PC-3 (cell line): ENCODE measurements at regions of chr1 and their contacts with region 1.

Region 1: DNA sequence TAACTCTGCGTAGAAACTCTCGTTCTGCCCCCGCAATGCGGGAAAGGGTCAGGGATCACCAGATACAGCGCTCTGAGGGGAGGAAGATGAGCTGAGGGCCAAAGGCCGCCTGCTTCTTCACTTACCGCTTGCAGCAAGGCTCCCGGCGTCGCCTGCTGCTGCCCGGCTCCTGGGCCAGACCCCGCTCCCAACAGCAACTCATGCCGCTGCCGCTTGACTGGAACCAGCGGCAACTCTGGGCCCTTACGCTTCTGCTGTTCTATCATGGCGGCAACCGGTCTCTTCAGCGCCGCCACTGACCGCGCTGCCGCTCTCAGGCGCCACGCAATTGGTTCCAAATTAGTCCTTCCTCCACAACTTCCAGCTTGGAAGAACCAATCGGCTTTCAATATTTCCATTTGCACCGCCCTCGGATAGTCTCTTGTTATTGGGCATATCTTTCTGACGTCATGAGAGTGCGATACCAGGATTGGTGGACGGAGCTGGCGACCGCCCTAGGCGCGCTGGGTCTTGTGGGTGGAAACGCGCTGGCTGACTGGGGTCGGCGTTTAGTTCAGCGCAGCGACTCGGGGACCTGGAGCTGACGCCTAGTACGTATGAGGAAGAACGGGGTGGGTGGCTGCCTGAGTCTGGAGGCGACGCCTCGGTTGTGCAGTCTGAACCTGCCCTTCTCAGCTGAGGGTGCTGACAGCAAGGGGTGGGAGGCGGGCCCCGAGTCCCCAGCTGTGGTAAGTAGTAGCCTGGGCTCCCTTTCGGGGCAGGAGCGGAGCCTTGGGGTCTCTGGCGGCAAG is at the starts of genes SNRNP40 and ZCCHC17:
- DNase-seq: peak; percentile 99
- ATAC-seq: peak; percentile 94
- H3K4me3 ChIP-seq: peak within 1 kb of the TSS; percentile 81
- H3K27ac ChIP-seq: peak within 1 kb of the TSS; percentile 37
- H3K4me1 ChIP-seq: peaks cover 32% of the 10 kb centered on the region
- H3K27me3 ChIP-seq: no peaks in the 10 kb centered on the region
- CTCF ChIP-seq: no peak; the same call in 1 of the 2 replicates
- total RNA-seq, gene SNRNP40: 230 and 288 TPM in 2 replicates
- total RNA-seq, gene ZCCHC17: 30.2 and 34.7 TPM in 2 replicates

Region 2: GRCh38 chr1:31249854-31250253 is 46.8 kb before region 1 on chr1:
- CTCF ChIA-PET with region 1: no interaction called
- POLR2A ChIA-PET with region 1: no interaction called
- intact Hi-C with region 1: no loop called
- DNase-seq: no peak
- ATAC-seq: no peak
- H3K4me3 ChIP-seq: no peak overlapping the region
- H3K27ac ChIP-seq: no peak overlapping the region
- H3K4me1 ChIP-seq: no peaks in the 10 kb centered on the region
- H3K27me3 ChIP-seq: no peaks in the 10 kb centered on the region
- CTCF ChIP-seq: no peak

Region 3: GRCh38 chr1:31264790-31265386 is 31.8 kb before region 1 on chr1:
- CTCF ChIA-PET with region 1: no interaction called
- POLR2A ChIA-PET with region 1: interaction called, 12 read pairs
- intact Hi-C with region 1: no loop called
- DNase-seq: no peak
- ATAC-seq: no peak
- H3K4me3 ChIP-seq: no peak overlapping the region
- H3K27ac ChIP-seq: no peak overlapping the region
- H3K4me1 ChIP-seq: peaks cover 13% of the 10 kb centered on the region; the same call in 1 of the 2 replicates
- H3K27me3 ChIP-seq: no peaks in the 10 kb centered on the region
- CTCF ChIP-seq: no peak

Region 4: GRCh38 chr1:31739346-31739745 is 442.7 kb after region 1 on chr1:
- CTCF ChIA-PET with region 1: no interaction called
- POLR2A ChIA-PET with region 1: no interaction called
- intact Hi-C with region 1: no loop called
- DNase-seq: no peak
- ATAC-seq: no peak
- H3K4me3 ChIP-seq: no peak overlapping the region
- H3K27ac ChIP-seq: no peak overlapping the region
- H3K4me1 ChIP-seq: no peaks in the 10 kb centered on the region
- H3K27me3 ChIP-seq: no peaks in the 10 kb centered on the region
- CTCF ChIP-seq: no peak